Esophagus squamous epithelium (tissue), 5 donors: ENCODE measurements at regions of chr2 and their contacts with region 1.

Region 1: GRCh38 chr2:46487667-46488333 is 8.4 kb downstream of the TMEM247 start:
- DNase-seq: no peak
- H3K4me3 ChIP-seq: no peak overlapping the region
- H3K27ac ChIP-seq: peak overlapping the region in 2 of 4 donors; percentile 29 to 46
- H3K4me1 ChIP-seq: peaks cover 0 to 34% (median 18%) of the 10 kb centered on the region in 3 donors
- H3K27me3 ChIP-seq: no peaks in the 10 kb centered on the region
- CTCF ChIP-seq: no peak
- POLR2A ChIP-seq: no peak

Region 2: GRCh38 chr2:46029332-46029811 is 458.4 kb before region 1 on chr2:
- intact Hi-C with region 1: no loop called
- DNase-seq: no peak
- H3K4me3 ChIP-seq: no peak overlapping the region
- H3K27ac ChIP-seq: peak overlapping the region in 3 of 4 donors; percentile 14 to 65 (median 53)
- H3K4me1 ChIP-seq: peaks cover 10 to 42% (median 19%) of the 10 kb centered on the region in 3 donors
- H3K27me3 ChIP-seq: no peaks in the 10 kb centered on the region
- CTCF ChIP-seq: peak in 1 of 6 experiments; percentile 25
- POLR2A ChIP-seq: no peak

Region 3: DNA sequence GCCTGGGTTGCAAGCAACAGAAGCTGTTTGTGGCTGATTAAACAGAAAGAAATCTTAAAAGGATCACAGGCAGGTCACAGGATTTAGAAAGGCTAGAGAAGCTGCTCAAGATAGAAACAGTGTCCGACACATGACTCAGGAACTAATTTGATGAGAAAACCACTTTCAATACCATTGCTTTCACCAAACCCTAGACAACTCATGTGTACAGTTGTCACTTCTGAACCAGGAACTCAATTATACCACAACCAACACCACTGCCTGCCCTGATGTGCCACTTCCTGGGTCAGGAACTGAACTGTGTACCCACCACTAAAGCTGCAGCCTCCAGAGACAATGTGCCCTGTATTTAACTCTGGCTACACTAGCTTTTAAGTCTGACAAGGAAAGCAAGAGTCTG is 47.6 kb after region 1 on chr2:
- intact Hi-C with region 1: no loop called
- DNase-seq: no peak
- H3K4me3 ChIP-seq: no peak overlapping the region
- H3K27ac ChIP-seq: peak overlapping the region in 1 of 4 donors; percentile 54
- H3K4me1 ChIP-seq: peaks cover 0 to 33% (median 4%) of the 10 kb centered on the region in 3 donors
- H3K27me3 ChIP-seq: no peaks in the 10 kb centered on the region
- CTCF ChIP-seq: no peak
- POLR2A ChIP-seq: no peak

Region 4: GRCh38 chr2:46601328-46601963 is 113.6 kb after region 1 on chr2:
- intact Hi-C with region 1: loop called (anchors 10 kb)
- DNase-seq: no peak
- H3K4me3 ChIP-seq: no peak overlapping the region
- H3K27ac ChIP-seq: no peak overlapping the region
- H3K4me1 ChIP-seq: no peaks in the 10 kb centered on the region
- H3K27me3 ChIP-seq: no peaks in the 10 kb centered on the region
- CTCF ChIP-seq: peak in 4 of 6 experiments; percentile 35 to 55 (median 47)
- POLR2A ChIP-seq: no peak

Region 5: DNA sequence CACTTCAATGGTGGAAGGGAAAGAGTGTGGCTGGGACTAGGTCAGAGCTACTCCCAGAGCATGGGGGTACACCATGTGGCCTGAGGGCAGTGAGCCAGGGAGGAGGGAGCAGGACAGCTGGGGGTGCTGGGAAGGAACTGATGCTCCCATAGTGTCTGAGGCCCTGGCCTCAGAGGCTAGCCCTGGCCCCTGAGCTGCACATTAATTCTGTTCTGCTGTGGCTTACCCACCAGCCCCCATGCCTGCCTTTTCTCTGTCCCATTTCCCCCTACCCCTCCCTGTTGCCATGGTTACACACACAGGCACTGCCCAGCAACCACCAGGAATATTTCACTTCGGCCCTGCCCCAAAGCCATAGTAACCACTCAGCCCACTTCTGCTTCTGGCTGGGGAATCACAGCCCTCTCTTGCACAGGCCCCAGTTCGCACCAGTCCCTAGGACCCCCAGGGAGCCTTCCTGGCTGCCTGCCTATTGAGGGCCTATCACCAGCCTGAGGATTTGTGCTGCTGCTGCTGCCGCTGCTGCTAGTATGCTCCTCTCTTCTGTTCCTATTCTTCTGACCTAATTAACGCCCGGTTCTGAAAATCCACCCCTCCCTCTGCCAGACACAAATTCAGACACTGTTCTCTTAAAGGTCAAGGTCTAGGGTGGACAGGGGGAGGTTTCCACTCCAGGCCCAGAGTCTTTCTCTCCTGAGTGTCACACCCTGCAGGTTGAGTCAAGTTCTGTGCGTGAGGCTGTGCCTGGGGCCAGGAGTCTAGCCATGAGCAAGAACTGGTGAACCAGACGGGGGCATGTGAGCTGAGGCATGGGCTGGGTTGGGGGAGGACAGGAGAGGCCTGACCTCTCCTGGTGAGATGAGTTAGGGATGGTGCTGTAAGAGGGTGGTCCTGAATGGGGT is 514.9 kb after region 1 on chr2:
- intact Hi-C with region 1: no loop called
- DNase-seq: no peak
- H3K4me3 ChIP-seq: no peak overlapping the region
- H3K27ac ChIP-seq: peak overlapping the region in 3 of 4 donors; percentile 64 to 77 (median 75)
- H3K4me1 ChIP-seq: peaks cover 7 to 52% (median 22%) of the 10 kb centered on the region in 3 donors
- H3K27me3 ChIP-seq: no peaks in the 10 kb centered on the region
- CTCF ChIP-seq: no peak
- POLR2A ChIP-seq: no peak